ENCODE measurements at regions of chr12 and their contacts with region 1.

Region 1: GRCh38 chr12:20369305-20370005 is 1.1 kb downstream of the PDE3A start:
- DNase-seq: peak; percentile 14
- H3K4me3 ChIP-seq: peak overlapping the region in 2 of 3 experiments; percentile 2 to 8
- H3K27ac ChIP-seq: no peak overlapping the region
- H3K4me1 ChIP-seq: peaks cover 13% of the 10 kb centered on the region
- H3K27me3 ChIP-seq: peaks cover 30% of the 10 kb centered on the region
- CTCF ChIP-seq: no peak

Region 2: DNA sequence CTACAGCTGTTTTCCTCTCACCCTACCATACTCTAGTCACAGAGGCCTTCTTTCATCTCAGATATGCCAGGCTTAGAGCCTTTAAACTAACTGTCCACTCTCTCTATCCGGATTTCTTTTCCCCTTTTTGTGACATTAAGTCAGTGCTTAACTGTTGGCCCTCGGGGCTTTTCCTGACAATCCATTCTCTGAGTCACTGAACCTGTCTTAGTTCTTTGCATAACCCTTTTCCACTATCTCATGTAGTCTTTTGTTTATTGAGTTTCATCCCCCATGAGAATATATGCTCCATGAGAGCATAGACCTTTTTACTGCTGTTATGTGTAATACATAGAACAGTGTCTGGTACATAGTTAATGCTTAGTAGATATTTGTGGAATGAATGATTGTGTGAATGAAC is 1171.2 kb before region 1 on chr12:
- CTCF ChIA-PET with region 1: no interaction called
- dilution Hi-C with region 1: no loop called
- in situ Hi-C with region 1: no loop called
- intact Hi-C with region 1: no loop called
- DNase-seq: peak; percentile 89
- H3K4me3 ChIP-seq: no peak overlapping the region
- H3K27ac ChIP-seq: peak overlapping the region; percentile 44
- H3K4me1 ChIP-seq: peaks cover 24% of the 10 kb centered on the region
- H3K27me3 ChIP-seq: no peaks in the 10 kb centered on the region
- CTCF ChIP-seq: no peak

Region 3: DNA sequence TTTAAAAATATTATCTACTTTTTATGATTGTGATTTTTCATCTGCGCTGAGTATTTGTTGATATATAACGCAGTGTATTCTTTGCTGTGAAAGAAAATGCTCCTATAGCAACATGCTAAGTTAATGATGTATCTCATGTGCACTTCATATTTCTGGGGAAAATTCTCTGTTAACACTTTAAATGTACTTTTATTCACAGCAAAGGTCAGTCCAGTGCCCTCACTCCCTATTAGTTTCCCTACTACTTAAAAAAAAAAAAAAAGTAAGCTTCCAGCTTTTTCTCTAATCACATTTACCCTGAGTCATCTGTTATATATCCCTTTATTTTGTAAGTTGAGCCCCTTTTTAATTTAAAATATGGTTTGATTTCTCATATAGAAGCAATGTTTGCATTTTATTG is 710.4 kb before region 1 on chr12:
- CTCF ChIA-PET with region 1: interaction called, 15 read pairs
- dilution Hi-C with region 1: no loop called
- in situ Hi-C with region 1: no loop called
- intact Hi-C with region 1: no loop called
- DNase-seq: no peak
- H3K4me3 ChIP-seq: no peak overlapping the region
- H3K27ac ChIP-seq: no peak overlapping the region
- H3K4me1 ChIP-seq: no peaks in the 10 kb centered on the region
- H3K27me3 ChIP-seq: no peaks in the 10 kb centered on the region
- CTCF ChIP-seq: no peak

Region 4: DNA sequence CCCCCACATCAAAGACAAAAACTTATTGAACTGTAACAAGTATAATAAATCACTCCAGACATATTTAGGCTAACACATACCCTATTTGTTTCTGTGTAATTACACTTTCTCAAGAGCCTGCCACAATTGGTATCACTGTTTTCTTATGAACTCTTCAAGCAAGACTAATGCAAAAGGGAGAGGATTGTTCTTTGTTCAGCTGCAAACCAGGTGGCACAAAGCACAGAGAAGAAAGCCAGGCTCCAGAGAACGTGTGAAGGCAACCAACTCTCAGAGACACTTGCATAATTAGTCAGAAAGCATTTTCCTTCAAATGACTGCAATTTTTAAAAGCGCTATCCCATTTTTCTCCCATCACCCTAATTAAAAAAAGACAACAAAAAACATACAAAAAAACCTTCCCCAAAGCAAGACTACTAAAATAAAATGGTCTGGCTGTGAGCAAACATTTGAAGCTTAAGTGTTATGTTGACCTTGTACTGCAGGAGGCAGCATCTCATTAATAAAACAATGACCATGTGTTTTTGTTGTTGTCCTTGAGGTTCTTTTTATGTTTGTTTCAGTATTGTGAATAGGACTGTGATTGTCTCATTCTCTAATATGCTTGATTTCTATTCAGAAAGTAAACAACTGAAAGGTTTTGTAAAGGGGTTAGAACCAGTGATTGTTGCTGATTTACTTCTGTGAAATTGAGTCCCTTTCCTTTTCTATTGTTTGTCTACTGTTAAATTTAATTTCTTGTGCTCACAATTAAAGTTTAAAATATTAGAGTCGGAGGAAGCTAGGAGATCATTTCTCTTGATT is 453.9 kb before region 1 on chr12:
- CTCF ChIA-PET with region 1: no interaction called
- dilution Hi-C with region 1: no loop called
- in situ Hi-C with region 1: no loop called
- intact Hi-C with region 1: loop called (anchors 10 kb)
- DNase-seq: no peak
- H3K4me3 ChIP-seq: no peak overlapping the region
- H3K27ac ChIP-seq: no peak overlapping the region
- H3K4me1 ChIP-seq: no peaks in the 10 kb centered on the region
- H3K27me3 ChIP-seq: no peaks in the 10 kb centered on the region
- CTCF ChIP-seq: peak; percentile 53 to 54

Region 5: GRCh38 chr12:20248646-20249045 is 120.8 kb before region 1 on chr12:
- CTCF ChIA-PET with region 1: no interaction called
- dilution Hi-C with region 1: no loop called
- in situ Hi-C with region 1: no loop called
- intact Hi-C with region 1: no loop called
- DNase-seq: no peak
- H3K4me3 ChIP-seq: no peak overlapping the region
- H3K27ac ChIP-seq: no peak overlapping the region
- H3K4me1 ChIP-seq: no peaks in the 10 kb centered on the region
- H3K27me3 ChIP-seq: no peaks in the 10 kb centered on the region
- CTCF ChIP-seq: no peak

Region 6: GRCh38 chr12:20629414-20630156 is 260.1 kb after region 1 on chr12:
- CTCF ChIA-PET with region 1: no interaction called
- dilution Hi-C with region 1: no loop called
- in situ Hi-C with region 1: no loop called
- intact Hi-C with region 1: no loop called
- DNase-seq: no peak
- H3K4me3 ChIP-seq: no peak overlapping the region
- H3K27ac ChIP-seq: no peak overlapping the region
- H3K4me1 ChIP-seq: no peaks in the 10 kb centered on the region
- H3K27me3 ChIP-seq: no peaks in the 10 kb centered on the region
- CTCF ChIP-seq: no peak

Measured in mammary epithelial cell (primary cell).